Mammary epithelial cell (primary cell): ENCODE measurements at regions of chr7 and their contacts with region 1.

Region 1: GRCh38 chr7:158891922-158892321 is 35.6 kb downstream of the DYNC2I1 start:
- DNase-seq: no peak
- H3K4me3 ChIP-seq: no peak overlapping the region
- H3K27ac ChIP-seq: no peak overlapping the region
- H3K4me1 ChIP-seq: no peaks in the 10 kb centered on the region
- H3K27me3 ChIP-seq: no peaks in the 10 kb centered on the region
- CTCF ChIP-seq: no peak

Region 2: DNA sequence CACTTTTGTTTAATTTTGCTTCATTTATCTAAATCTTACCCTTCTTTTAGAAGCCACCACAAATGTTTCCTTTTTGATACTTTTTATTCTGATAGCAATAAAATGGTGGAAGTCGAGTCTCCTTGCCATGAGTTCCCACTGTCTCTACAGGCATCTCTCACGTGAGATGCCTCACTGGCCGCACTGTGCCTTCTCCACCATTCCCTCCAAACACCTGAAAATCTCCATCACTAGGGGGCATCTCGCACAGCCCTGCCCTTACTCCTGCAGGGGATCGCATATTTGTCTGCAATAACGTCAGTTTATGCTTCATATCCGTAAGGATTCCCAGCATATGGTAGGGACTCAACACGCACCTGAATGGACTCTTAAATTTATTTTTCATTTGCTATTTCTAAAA is 131.0 kb before region 1 on chr7:
- CTCF ChIA-PET with region 1: no interaction called
- dilution Hi-C with region 1: no loop called
- in situ Hi-C with region 1: loop called in 1 of 2 experiments (anchors 10 kb)
- intact Hi-C with region 1: no loop called
- DNase-seq: no peak
- H3K4me3 ChIP-seq: no peak overlapping the region
- H3K27ac ChIP-seq: no peak overlapping the region
- H3K4me1 ChIP-seq: no peaks in the 10 kb centered on the region
- H3K27me3 ChIP-seq: no peaks in the 10 kb centered on the region
- CTCF ChIP-seq: peak; percentile 11 to 17

Region 3: DNA sequence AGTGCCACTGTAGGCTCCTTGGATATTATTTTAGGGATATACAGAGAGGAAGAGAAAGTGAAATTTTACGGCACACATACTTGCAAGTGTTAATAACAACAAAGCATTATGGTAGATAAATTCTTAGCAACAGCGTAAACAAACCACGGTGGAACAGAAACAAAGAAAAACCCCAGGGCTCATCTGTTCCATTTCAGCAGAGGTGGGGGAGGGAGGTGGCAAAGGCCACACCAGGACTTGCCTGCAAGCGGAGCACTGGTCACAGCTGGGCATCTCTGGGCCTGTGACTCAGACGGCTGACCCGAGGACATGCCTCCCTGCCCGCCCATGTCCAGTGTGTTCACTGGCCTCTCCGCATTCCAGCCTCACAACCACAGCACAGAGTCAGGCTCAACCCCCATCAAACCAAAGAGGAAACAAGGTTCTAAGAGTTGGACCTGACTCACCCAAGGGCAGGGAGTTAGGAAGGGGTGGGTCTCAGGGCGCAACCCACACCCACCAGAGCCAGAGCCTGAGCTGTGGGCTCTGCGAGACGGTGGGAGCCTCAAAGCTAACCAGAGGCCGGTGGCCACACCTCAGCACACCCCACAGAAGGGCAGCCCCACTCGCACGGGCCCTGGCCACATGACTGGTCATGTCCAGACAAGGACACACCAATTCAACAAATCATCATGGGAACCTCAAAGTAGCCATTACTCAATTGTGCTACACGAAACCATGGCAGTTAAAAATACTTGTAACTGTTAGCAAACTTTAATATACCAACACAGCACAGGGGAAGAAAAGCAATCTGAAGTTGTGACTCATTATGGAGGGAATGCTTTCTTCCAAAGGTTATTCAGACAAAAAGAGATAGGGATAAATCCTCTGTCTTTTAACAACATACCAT is 73.4 kb before region 1 on chr7:
- CTCF ChIA-PET with region 1: no interaction called
- dilution Hi-C with region 1: no loop called
- in situ Hi-C with region 1: no loop called
- intact Hi-C with region 1: no loop called
- DNase-seq: peak; percentile 99
- H3K4me3 ChIP-seq: peak overlapping the region; percentile 35 to 55 (median 53)
- H3K27ac ChIP-seq: peak overlapping the region; percentile 100
- H3K4me1 ChIP-seq: peaks cover 63% of the 10 kb centered on the region
- H3K27me3 ChIP-seq: no peaks in the 10 kb centered on the region
- CTCF ChIP-seq: peak in 1 of 2 donors; percentile 14

Region 4: DNA sequence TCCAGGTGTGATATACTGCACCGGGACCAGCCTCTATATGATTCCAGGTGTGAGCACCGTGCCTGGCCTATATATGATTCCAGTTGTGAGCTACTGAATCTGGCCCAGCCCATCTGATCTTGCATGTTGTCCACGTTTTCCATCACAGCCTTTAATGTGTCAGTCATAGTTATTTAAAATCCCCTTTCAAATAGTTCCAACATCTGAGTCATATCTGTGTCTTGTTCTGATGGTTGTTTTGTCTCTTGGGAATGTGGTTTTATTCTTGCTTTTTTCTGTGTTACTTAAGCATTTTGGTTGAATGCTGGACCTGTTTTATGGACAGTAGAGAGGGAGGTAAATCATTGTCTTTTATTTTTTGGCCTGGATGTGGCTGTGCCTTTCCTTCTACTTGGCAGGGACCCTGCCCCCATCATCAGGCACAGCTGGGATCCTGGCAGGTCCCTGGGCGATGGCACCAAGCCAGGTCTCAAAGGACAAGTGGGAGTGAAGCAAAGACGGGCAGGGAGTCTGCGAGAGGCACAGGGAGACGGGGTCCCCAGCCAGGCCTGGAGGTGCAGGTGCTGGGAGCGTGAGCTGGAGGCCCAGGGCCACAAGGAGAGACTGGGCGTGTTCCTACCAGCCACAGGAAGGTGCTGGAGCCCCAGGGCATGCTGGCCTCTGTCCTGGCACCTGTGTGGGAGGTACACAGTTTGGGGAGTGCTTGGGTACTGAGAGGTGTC is 59.2 kb after region 1 on chr7:
- CTCF ChIA-PET with region 1: no interaction called
- dilution Hi-C with region 1: loop called (anchors 5 kb)
- in situ Hi-C with region 1: no loop called
- intact Hi-C with region 1: no loop called
- DNase-seq: no peak
- H3K4me3 ChIP-seq: no peak overlapping the region
- H3K27ac ChIP-seq: no peak overlapping the region
- H3K4me1 ChIP-seq: no peaks in the 10 kb centered on the region
- H3K27me3 ChIP-seq: no peaks in the 10 kb centered on the region
- CTCF ChIP-seq: no peak